Common myeloid progenitor, CD34-positive (primary cell): ENCODE measurements at regions of chr2 and their contacts with region 1.

Region 1: DNA sequence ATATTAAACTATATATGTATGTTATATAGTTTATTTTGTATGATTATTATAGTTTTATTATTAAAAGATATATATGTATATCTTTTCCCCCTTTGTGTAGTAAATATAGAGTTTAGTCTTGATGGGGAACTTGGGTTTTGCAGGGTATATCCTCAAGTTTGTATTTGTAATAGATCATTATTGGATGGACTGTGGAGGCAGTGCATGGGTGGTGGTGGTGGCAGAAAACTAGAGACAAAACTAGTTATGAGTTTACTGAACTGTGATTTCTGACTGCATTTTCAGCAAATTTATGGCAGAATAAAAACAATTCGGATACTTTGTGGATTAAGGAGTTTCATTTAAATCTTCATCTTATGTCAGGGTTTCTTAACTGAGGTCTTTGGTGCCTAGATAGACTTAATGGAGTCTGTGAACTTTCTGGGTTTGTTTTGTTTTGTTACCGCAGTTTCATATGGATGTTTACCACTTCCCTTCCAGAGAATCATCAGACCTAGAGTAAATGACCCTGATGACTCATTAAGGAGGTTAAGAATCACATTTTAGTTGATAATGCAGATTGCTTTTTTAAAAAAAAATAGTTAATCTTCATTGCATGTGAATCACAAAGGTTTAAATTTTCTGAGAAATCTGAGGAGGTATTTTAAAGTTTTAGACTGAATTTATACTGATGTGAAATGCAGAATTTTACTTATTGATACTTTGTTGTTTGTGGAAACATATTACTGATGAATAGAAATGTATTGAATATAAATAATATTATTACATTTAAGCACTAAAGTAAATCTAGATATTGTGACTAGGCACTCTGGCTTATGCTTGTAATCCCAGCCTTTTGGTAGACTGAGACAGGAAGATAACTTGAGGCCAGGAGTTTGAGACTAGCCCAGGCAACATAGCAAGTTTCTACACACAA is 14.5 kb downstream of the EPC2 start:
- DNase-seq: peak; percentile 77 to 93 (median 89)
- H3K4me3 ChIP-seq: peak overlapping the region in 2 of 7 experiments; percentile 4 to 18
- H3K27ac ChIP-seq: peak overlapping the region; percentile 80 to 88
- H3K4me1 ChIP-seq: peaks cover 13 to 31% (median 19%) of the 10 kb centered on the region in 4 experiments
- H3K27me3 ChIP-seq: no peaks in the 10 kb centered on the region

Region 2: DNA sequence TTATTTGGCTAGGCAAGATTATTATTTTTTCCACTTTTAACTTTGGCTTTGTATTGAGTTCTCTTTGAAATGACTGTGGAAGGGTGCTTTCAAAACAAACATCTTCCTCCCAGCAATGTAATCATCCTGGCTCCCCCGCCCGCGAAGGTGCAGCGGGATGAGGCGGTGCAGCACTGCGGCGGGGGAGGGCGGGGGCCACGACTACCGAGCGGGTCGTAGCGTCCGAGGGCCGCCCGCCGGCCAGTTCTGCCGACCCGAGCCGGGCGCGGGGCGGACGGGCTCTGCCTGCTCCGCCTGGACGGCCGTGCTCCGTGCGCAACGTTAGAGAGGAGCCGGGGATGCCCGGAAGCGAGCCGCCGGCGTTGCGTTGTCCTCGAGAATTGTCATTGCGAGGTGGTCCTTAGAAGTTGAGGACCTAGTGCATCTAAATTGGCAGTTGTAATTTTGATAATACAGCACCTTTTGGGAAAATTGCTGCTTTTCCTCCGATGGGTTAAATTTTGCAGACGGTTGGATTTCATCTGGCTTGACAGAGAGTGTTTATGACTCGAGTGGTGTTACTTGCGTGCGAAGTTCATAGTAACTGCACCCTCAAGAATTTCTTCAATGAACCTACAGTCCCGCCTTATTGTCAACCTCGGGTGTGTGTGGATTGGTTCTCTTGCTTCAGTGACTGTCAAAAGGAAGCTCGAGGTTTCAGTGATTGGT is 13.4 kb before region 1 on chr2:
- CTCF ChIA-PET with region 1: interaction called, 16 read pairs
- POLR2A ChIA-PET with region 1: interaction called, 3 read pairs
- DNase-seq: peak; percentile 91 to 98 (median 96)
- H3K4me3 ChIP-seq: peak overlapping the region; percentile 63 to 95 (median 90)
- H3K27ac ChIP-seq: peak overlapping the region; percentile 84 to 95
- H3K4me1 ChIP-seq: peaks cover 2 to 26% (median 13%) of the 10 kb centered on the region in 4 experiments
- H3K27me3 ChIP-seq: no peaks in the 10 kb centered on the region